Activated CD4-positive, alpha-beta T cell treated with anti-CD3 and anti-CD28 coated beads for 36 hours (primary cell): ENCODE measurements at regions of chr14 and their contacts with region 1.

Region 1: DNA sequence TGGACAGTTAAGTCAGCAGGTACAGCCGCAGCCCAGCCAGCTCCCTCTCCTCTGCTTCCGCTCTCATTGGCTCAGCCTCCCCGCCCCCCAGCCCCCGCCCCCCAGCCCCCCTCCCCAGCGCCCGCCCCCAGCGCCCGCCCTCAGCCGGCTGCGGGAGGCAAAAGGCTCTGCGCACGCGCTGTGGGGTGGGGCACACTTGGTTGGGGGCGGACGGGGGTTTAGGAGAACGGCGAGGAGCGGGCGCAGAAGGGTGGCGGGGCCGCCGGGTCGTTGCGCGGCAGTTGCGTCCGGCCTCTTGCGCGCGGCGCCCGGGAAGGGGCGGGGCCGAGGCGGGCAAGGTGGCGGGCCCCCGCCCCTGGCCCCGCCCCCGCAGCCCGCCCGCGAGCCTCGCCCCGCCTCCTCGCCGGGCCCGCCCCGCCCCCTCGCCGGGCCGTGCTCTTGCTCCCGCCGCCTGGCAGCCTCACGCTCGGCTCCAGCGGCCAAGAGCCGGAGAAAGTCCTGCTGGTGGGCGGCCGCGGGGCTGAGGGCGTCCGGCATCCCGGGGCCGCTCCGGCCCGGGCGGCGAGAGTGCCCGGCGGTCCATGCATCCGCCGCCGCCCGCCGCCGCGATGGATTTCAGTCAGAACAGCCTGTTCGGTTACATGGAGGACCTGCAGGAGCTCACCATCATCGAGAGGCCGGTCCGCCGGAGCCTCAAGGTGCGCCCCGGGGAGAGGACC is at the start of gene PPP4R4:
- DNase-seq: peak; percentile 96
- ATAC-seq: peak; percentile 89
- H3K4me3 Mint-ChIP-seq: peak within 1 kb of the TSS; percentile 81
- H3K27ac Mint-ChIP-seq: peak within 1 kb of the TSS; percentile 86
- H3K4me1 Mint-ChIP-seq: peaks cover 44% of the 10 kb centered on the region
- H3K27me3 Mint-ChIP-seq: peaks cover 5% of the 10 kb centered on the region
- total RNA-seq, gene PPP4R4: 21.4 TPM

Region 2: DNA sequence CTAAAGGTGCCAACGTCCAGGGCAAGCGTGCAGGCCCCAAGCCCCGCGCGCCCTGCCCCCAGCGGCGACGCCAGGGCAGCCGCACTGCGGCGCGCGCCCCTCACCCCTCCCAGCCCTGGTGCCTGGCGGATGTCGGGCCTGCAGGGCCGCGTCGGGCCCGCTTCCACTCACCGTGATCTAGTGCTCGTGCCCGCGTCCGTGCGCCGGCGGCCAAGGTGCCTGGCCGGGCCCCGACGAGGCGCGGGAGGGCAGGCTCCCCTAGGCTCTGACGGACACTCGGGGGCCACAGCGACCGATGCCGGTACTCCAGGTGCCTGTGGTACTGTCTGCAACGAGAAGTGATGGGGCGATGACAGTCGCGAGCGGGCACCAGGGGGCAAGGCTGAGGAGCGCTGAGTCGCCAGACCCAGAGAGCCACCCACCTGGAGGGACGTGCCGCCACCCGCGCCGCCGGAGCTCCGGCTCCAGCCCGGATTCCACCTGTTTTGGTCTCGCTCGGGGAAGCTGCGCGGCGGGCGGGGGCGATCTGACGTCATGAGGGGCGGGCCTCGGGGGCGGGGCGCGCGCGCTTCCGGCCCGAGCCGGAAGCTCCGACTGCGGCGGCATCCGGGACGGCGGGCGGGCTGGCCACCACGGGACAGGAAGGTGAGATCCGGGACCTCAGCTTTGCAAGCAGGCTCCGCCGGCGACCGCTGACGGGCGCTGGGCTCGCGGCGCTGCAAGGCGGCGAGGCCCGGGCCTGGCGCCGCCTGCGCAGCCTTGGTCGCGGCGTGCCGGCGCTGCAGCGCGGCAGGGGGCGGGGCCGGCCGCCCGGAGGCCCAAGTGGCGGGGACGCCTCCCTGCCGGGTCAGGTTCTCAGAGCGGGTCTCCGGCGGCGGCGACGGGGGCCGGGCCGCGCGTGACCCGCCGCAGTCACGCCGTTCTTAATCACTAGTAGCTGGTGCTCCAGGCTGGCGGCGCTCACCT is 989.4 kb before region 1 on chr14 and contains the starts of genes LYSET and MOAP1:
- CTCF ChIA-PET with region 1: no interaction called
- POLR2A ChIA-PET with region 1: no interaction called
- intact Hi-C with region 1: loop called in 1 of 2 experiments (anchors 10 kb)
- DNase-seq: peak; percentile 95
- ATAC-seq: peak; percentile 90
- H3K4me3 Mint-ChIP-seq: peak within 1 kb of the TSS; percentile 91
- H3K27ac Mint-ChIP-seq: peak within 1 kb of the TSS; percentile 93
- H3K4me1 Mint-ChIP-seq: peaks cover 40% of the 10 kb centered on the region
- H3K27me3 Mint-ChIP-seq: no peaks in the 10 kb centered on the region
- total RNA-seq, gene LYSET: 9.9 to 10.2 TPM
- total RNA-seq, gene MOAP1: 11.7 to 15.9 TPM

Region 3: DNA sequence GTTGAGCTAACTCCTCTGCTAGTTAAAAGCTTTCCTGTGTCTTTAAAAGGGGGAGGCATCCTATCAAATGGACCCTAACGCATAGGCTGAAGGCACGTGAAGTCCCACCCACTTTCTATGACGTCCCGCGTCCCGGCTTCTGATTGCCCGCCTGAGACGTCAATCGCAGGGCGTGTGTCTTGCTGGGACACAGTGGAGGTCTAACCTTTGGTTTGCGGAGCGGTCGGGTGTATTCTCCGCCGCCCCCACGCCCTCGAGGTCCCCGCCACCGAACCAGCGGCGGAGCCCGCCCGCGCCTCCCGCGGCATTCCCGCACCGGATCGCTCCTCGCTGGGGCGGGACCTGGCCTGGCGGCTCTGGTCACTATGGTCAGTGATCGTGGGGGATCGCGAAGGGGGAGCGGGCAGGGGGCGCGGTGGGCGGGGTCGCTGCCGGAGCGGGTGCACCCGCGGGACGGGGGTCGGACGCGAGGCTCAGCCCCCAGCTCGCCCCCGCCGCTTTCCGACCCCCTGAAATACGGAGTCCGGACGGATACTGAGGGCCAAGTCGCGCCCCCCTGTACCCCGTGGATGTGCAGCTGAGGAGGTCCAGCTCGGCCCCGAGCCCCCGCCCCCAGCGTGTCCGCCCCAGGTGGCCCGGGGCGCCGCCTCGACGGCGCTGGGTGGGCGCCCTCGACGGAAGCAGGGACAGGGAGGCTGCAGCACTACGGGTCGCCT is 147.7 kb before region 1 on chr14 and contains the start of gene OTUB2:
- CTCF ChIA-PET with region 1: no interaction called
- POLR2A ChIA-PET with region 1: no interaction called
- intact Hi-C with region 1: loop called in 1 of 2 experiments (anchors 1 kb)
- DNase-seq: peak; percentile 98
- ATAC-seq: peak; percentile 99
- H3K4me3 Mint-ChIP-seq: peak within 1 kb of the TSS; percentile 54
- H3K27ac Mint-ChIP-seq: no peak within 1 kb of the TSS
- H3K4me1 Mint-ChIP-seq: peaks cover 32% of the 10 kb centered on the region
- H3K27me3 Mint-ChIP-seq: no peaks in the 10 kb centered on the region
- total RNA-seq, gene OTUB2: 0.75 to 0.93 TPM

Region 4: DNA sequence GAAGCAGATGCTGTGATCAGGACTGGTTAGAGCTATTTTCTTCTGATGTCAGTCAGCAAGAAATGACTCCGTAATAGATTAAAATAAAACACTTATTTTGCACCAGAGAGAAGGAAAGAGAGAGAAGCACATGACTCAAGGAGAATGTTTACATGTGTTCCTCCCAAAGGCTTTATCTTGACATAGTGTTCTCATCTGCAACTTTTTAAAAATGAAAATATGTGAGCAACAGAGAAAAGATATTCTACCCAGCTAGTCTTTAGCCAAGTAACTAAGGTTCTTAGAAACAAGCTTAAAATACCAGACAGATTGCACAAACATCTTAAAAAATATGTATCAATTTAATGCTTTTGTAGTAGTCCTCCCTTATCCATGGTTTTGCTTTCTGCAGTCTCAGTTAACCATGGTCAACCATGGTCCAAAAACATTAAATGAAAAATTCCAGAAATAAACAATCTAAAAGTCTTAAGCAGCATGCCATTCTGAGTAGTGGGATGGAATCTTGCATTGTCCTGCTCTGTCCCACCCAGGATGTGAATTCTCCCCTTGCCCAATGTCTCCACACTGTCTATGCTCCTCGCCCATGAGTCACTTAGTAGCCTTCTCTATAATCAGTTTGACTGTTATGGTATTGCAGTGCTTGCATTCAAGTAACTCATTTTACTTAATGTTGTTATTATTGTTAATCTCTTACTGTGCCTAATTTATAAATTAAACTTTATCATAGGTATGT is 109.1 kb after region 1 on chr14:
- CTCF ChIA-PET with region 1: no interaction called
- POLR2A ChIA-PET with region 1: no interaction called
- intact Hi-C with region 1: no loop called
- DNase-seq: no peak
- ATAC-seq: no peak
- H3K4me3 Mint-ChIP-seq: no peak overlapping the region
- H3K27ac Mint-ChIP-seq: no peak overlapping the region
- H3K4me1 Mint-ChIP-seq: peaks cover 22% of the 10 kb centered on the region
- H3K27me3 Mint-ChIP-seq: no peaks in the 10 kb centered on the region

Region 5: DNA sequence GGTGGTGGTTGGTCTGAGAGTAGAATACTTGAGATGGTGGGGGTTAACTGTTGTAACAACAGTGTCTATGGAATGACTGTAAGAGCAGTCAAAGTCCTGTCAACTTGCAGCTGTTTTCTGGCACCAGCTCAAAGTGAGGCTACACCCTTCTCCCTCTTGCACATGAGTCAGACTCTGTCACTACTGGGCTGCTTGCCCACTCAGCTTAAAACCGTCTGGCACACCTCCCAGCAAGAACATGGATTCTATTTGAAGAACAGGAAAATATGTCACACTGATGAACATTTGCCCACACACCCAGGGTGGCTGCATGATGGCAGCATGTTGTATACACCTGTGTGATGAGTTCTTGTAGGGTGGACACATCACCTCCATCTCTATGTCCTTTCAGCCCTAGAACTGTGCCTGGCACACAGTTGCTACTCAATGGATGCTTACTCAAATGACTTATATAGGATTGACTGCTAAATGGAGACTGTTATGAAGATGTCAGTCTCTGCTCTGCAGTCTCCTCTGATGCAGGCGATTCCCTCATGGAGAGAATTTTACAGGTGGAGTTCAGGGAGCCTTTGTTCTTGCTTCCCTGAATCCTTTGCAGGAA is 168.4 kb after region 1 on chr14:
- CTCF ChIA-PET with region 1: no interaction called
- POLR2A ChIA-PET with region 1: interaction called, 3 read pairs
- intact Hi-C with region 1: loop called (anchors 5 kb)
- DNase-seq: peak; percentile 77
- ATAC-seq: peak; percentile 71
- H3K4me3 Mint-ChIP-seq: no peak overlapping the region
- H3K27ac Mint-ChIP-seq: peak overlapping the region; percentile 93
- H3K4me1 Mint-ChIP-seq: peaks cover 79% of the 10 kb centered on the region
- H3K27me3 Mint-ChIP-seq: peaks cover 2% of the 10 kb centered on the region

Region 6: DNA sequence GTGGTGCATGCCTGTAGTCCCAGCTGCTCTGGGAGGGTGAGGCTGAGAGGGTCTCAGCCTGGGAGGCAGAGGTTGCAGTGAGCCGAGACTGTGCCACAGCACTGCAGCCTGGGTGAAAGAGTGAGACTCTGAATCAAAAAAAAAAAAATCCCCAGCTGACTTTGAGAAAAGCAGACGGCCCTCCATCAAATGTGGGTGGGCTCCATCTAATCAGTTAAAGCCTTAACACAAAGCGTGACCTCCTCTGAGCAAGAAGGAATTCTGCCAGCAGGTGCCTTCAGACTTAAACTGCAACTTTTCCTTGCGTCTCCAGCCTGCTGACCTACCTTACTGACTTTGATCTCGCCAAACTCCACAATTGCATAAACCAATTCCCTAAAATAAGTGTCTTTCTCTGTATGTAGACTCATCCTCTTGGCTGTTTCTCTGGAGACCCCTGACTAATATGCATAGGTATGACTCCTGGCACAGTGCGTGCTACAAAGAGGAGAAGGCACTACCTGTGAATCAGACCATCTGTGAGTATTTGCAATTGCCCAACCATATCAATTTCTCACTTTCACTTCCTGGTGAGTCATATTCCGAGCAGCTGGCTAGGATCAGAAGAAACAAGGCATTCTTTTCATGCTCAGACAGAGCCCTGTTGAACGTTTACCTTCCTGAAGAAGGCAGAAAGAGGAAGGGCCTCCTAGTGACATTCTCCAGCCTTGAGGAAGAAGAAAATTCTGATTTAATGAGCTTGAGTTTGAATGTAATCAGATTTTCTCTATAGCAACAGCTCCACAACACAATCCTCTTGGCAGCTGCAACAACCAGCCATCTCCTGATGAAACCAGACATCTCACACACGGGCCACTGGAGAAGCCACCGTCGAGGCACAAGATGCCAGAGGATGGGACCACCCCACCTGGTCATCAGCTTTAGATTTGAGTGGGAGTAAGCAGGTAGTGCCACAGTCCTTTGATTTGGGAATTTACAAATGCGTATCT is 1091.4 kb after region 1 on chr14:
- CTCF ChIA-PET with region 1: no interaction called
- POLR2A ChIA-PET with region 1: no interaction called
- intact Hi-C with region 1: loop called in 1 of 2 experiments (anchors 10 kb)
- DNase-seq: peak; percentile 66
- ATAC-seq: peak; percentile 83
- H3K4me3 Mint-ChIP-seq: no peak overlapping the region
- H3K27ac Mint-ChIP-seq: peak overlapping the region; percentile 35
- H3K4me1 Mint-ChIP-seq: peaks cover 39% of the 10 kb centered on the region
- H3K27me3 Mint-ChIP-seq: no peaks in the 10 kb centered on the region